ENCODE measurements at regions of chr3 and their contacts with region 1.

Region 1: DNA sequence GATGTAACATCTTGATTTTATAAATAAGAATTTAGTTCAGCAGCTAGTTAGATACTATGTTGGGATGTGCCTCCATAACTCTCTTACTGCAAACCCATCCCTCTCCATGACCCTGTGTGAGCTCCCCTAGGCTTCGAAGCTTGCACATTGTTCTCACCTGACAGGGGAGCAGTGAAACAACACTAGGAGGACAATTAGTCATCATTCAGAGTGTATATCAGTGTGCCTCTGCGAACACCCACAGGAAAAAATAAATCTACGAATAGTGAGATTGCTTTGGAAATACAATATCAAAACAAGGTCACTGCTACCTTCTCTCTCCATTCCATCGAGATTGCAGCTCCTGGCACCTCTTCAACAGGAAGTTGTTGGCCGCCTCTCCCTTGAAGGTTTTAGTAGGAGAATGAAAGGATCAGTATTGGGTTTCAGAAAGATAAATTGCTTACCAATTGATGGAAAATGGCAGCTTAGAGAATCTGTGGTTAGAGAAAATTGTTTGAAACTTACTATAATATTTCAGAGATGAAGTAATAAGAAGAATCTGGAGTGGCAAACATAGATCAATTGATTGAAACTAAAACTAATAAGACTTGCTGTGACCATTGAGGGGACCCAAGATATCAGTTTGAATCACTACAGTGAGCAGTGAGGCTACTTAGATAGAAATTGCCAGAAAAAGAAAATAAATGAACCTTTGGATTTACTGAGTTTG is 103.2 kb downstream of the CHL1 start:
- DNase-seq: no peak
- CTCF ChIP-seq: no peak

Region 2: GRCh38 chr3:317012-317411 is 17.3 kb after region 1 on chr3:
- CTCF ChIA-PET with region 1: interaction called, 10 read pairs
- POLR2A ChIA-PET with region 1: no interaction called
- DNase-seq: no peak
- CTCF ChIP-seq: no peak